Activated CD4-positive, alpha-beta memory T cell treated with anti-CD3 and anti-CD28 coated beads for 36 hours (primary cell): ENCODE measurements at regions of chrX and their contacts with region 1.

Region 1: GRCh38 chrX:101097546-101098453 is at the start of gene CENPI:
- DNase-seq: peak; percentile 95
- H3K4me3 Mint-ChIP-seq: peak within 1 kb of the TSS; percentile 84
- H3K27ac Mint-ChIP-seq: peak within 1 kb of the TSS; percentile 81
- H3K4me1 Mint-ChIP-seq: peaks cover 30% of the 10 kb centered on the region
- H3K27me3 Mint-ChIP-seq: no peaks in the 10 kb centered on the region
- total RNA-seq, gene CENPI: 21.1 to 22.3 TPM

Region 2: DNA sequence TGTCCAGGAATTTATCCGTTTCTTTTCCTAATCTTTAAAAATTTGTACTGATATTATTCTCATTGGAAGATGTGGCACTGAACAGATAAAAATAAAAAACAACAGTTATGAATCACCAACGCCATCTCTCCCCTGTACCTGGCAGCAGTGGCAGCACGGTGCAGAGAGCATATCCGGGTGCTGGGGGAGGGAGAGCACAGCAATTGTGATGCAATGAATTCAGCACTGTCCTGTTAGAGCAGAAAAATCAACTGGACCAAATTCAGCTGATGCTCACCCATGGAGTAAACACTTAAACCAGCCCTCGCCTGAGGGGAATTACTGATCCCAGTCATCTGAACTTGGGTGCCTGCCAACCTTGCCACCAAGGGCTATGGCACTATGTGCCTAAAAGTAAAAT is 1340.1 kb before region 1 on chrX:
- CTCF ChIA-PET with region 1: no interaction called
- POLR2A ChIA-PET with region 1: no interaction called
- intact Hi-C with region 1: no loop called
- DNase-seq: no peak
- H3K4me3 Mint-ChIP-seq: no peak overlapping the region
- H3K27ac Mint-ChIP-seq: no peak overlapping the region
- H3K4me1 Mint-ChIP-seq: no peaks in the 10 kb centered on the region
- H3K27me3 Mint-ChIP-seq: no peaks in the 10 kb centered on the region

Region 3: GRCh38 chrX:100819837-100820666 is 277.7 kb before region 1 on chrX and contains the start of gene CSTF2:
- CTCF ChIA-PET with region 1: no interaction called
- POLR2A ChIA-PET with region 1: no interaction called
- intact Hi-C with region 1: loop called (anchors 1 kb)
- DNase-seq: peak; percentile 87
- H3K4me3 Mint-ChIP-seq: peak within 1 kb of the TSS; percentile 78
- H3K27ac Mint-ChIP-seq: peak within 1 kb of the TSS; percentile 88
- H3K4me1 Mint-ChIP-seq: peaks cover 8% of the 10 kb centered on the region
- H3K27me3 Mint-ChIP-seq: no peaks in the 10 kb centered on the region
- total RNA-seq, gene CSTF2: 41.3 to 42.8 TPM

Region 4: DNA sequence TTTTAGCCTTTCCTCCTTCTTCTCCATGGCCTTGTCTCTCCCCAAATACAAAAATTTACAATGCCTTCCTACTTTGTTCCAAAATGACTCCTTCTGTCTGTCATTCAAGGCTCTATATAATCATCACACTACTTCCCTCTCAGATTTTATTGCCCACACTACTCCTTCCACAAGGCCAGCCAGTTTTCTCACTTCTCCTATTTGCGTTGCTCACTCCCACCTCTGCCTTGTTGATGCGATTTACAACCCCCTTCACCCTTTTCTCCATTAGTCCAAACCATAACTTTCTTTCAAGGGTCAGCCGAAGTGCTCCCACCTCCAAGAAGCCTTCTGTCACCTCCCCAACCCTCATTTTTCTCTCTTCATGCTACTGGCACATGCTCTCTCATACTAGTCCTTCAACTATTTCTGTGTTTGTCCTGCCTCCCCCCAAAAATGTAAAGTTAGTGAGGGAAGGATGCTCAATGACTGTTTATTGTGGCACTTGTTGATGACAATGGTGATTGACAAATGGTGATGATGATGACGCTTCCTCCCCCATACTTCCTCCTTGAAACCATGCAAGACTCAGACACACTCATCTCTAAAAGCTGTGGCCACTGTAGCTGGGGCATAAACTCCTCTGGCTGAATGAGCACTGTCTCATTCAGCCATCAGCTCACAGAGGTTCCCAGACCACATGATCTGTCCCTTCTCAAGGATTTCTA is 166.4 kb before region 1 on chrX:
- CTCF ChIA-PET with region 1: no interaction called
- POLR2A ChIA-PET with region 1: interaction called, 3 read pairs
- intact Hi-C with region 1: loop called (anchors 5 kb)
- DNase-seq: peak; percentile 43
- H3K4me3 Mint-ChIP-seq: no peak overlapping the region
- H3K27ac Mint-ChIP-seq: peak overlapping the region; percentile 73
- H3K4me1 Mint-ChIP-seq: peaks cover 21% of the 10 kb centered on the region
- H3K27me3 Mint-ChIP-seq: no peaks in the 10 kb centered on the region

Region 5: DNA sequence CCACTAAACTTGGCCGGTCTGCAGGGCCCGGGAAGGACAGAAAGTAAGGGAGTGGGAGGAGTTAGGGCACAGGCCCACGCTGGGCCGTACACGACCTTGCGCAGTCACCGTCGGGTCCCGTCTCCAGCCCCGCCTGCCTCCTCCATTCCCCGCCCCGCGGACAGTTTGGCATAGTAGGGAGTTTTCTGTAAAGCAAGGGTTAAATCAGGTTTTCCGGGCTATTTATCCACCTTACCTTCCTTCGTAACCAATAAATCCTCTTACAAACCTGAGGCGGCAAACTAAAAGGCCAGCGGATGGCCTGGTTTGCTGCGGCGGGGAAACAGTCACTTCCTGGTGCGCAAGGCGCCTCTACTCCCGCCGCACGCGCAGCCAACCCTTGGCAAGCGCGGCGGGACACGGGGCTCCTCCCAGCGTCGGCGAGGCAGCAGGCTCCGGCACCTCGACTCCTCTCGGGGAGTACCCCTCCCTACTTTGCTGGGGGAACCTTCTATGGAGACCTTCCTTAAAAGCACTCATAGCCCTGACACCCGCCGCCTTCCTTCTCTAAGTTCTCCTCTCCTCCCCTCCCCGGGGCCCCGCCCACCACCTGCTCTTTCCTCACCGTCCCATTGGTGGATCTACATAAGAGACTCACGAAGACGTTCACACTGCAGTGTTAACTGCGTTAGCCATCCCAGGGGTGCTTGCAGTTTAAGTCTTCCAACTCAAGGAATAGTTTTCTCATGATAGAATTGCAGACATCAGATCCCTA is 46.1 kb before region 1 on chrX and contains the start of gene TRMT2B:
- CTCF ChIA-PET with region 1: no interaction called
- POLR2A ChIA-PET with region 1: no interaction called
- intact Hi-C with region 1: loop called (anchors 1 kb)
- DNase-seq: peak; percentile 87
- H3K4me3 Mint-ChIP-seq: peak within 1 kb of the TSS; percentile 86
- H3K27ac Mint-ChIP-seq: peak within 1 kb of the TSS; percentile 96
- H3K4me1 Mint-ChIP-seq: peaks cover 19% of the 10 kb centered on the region
- H3K27me3 Mint-ChIP-seq: no peaks in the 10 kb centered on the region
- total RNA-seq, gene TRMT2B: 19.6 to 21.2 TPM

Region 6: DNA sequence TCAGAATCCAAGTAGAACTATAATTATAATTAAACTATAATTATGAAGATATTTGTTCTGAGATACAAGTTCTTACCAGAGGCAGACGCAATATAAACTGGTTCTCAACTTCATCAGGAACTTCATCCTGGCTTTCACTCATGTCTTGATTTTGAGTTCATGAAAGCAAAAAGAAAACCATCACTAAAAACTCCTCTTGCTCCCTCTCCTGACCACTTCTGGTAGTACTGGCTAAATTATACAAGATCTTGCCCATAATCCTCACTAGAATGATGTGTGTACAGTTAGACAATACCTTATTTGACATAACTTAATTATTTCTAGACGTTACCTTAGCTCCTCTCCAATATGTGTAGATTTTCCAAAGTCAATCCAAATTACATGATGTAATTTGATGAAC is 189.6 kb after region 1 on chrX:
- CTCF ChIA-PET with region 1: no interaction called
- POLR2A ChIA-PET with region 1: no interaction called
- intact Hi-C with region 1: no loop called
- DNase-seq: no peak
- H3K4me3 Mint-ChIP-seq: no peak overlapping the region
- H3K27ac Mint-ChIP-seq: no peak overlapping the region
- H3K4me1 Mint-ChIP-seq: no peaks in the 10 kb centered on the region
- H3K27me3 Mint-ChIP-seq: peaks cover 2% of the 10 kb centered on the region